Testis (tissue), 5 donors: ENCODE measurements at regions of chr6 and their contacts with region 1.

Region 1: DNA sequence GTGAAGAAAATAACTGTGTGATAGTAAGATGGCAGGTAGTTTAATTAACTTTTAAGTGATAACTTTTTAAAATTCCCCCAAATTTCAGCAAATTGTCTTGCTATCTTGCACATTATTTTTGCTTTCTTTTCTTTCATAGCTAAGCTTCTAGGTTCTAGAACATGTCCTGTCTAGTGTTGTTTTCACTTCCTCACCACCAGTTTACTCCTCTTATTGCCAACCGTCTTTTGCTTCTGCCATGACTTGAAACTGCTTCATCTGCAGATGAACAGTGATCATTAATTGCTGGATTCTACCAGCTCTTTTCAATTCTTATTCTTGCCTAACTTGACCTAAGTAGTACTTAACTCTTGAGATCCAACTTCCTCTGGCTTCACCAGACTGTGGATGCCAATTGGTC is 137.8 kb downstream of the CENPW start:
- DNase-seq: no peak
- H3K4me3 ChIP-seq: no peak overlapping the region
- H3K27ac ChIP-seq: no peak overlapping the region
- H3K4me1 ChIP-seq: no peaks in the 10 kb centered on the region
- H3K27me3 ChIP-seq: no peaks in the 10 kb centered on the region
- CTCF ChIP-seq: no peak
- POLR2A ChIP-seq: no peak

Region 2: GRCh38 chr6:125658759-125659431 is 818.8 kb before region 1 on chr6:
- intact Hi-C with region 1: loop called (anchors 5 kb)
- DNase-seq: no peak
- H3K4me3 ChIP-seq: no peak overlapping the region
- H3K27ac ChIP-seq: no peak overlapping the region
- H3K4me1 ChIP-seq: no peaks in the 10 kb centered on the region
- H3K27me3 ChIP-seq: no peaks in the 10 kb centered on the region
- CTCF ChIP-seq: no peak
- POLR2A ChIP-seq: no peak